H1 (cell line): ENCODE measurements at regions of chr6 and their contacts with region 1.

Region 1: GRCh38 chr6:37324131-37325033 is 29.4 kb upstream of the RNF8 start:
- DNase-seq: no peak
- H3K4me3 ChIP-seq: no peak overlapping the region
- H3K27ac ChIP-seq: no peak overlapping the region
- H3K4me1 ChIP-seq: no peaks in the 10 kb centered on the region
- H3K27me3 ChIP-seq: no peaks in the 10 kb centered on the region
- CTCF ChIP-seq: no peak
- EP300 ChIP-seq: no peak
- POLR2A ChIP-seq: no peak
- RAD21 ChIP-seq: no peak

Region 2: DNA sequence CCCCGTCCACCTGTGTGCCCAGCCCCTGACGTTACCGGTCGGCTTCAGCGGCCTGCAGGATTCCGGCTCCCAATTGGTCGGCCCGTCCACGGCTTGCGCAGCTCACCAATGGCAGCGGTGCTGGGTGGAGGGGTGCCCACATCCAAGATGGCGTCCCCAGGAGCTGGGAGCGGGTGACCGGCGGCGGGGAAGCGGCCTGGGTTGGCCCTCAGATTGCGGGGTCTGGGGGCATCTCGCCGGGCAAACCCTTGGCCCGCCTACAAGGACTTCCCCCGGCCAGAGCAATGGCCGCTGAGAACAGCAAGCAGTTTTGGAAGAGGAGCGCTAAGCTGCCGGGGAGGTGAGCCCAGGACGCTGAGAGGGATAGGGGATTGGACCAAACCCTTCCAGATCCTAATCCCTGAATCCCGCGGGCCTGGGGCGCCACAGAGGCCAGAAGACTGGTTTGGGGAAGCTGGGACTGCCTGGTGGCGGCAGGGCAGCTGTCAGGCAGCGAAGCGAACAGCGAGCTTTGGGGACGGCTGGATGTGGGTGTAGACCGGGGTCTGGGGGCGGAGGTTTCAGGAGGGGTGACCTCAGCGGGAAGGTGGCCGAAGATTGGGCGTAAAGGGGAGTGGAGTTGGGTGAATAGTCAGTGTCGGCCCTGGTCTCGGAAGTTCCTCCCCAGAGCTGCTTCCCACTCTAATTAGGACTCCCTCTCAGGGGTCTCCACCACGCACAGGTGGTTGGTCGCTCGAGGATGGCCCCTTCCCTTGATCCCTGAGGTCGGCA is 66.6 kb before region 1 on chr6 and contains the starts of genes TBC1D22B and TMEM217:
- CTCF ChIA-PET with region 1: no interaction called
- POLR2A ChIA-PET with region 1: no interaction called
- DNase-seq: peak; percentile 94 to 98
- H3K4me3 ChIP-seq: peak within 1 kb of the TSS; percentile 92 to 94 (median 94)
- H3K27ac ChIP-seq: peak within 1 kb of the TSS; percentile 92
- H3K4me1 ChIP-seq: peaks cover 0 to 4% (median 3%) of the 10 kb centered on the region in 4 experiments; a peak in 3 of 7 replicates
- H3K27me3 ChIP-seq: no peaks in the 10 kb centered on the region
- CTCF ChIP-seq: no peak
- EP300 ChIP-seq: no peak; a peak in 1 of 3 replicates
- POLR2A ChIP-seq: peak; percentile 31 to 62; a peak in 2 of 3 replicates
- RAD21 ChIP-seq: no peak
- total RNA-seq, gene TBC1D22B: 16.9 and 17.4 TPM in 2 replicates
- total RNA-seq, gene TMEM217: 0.29 and 0.60 TPM in 2 replicates

Region 3: DNA sequence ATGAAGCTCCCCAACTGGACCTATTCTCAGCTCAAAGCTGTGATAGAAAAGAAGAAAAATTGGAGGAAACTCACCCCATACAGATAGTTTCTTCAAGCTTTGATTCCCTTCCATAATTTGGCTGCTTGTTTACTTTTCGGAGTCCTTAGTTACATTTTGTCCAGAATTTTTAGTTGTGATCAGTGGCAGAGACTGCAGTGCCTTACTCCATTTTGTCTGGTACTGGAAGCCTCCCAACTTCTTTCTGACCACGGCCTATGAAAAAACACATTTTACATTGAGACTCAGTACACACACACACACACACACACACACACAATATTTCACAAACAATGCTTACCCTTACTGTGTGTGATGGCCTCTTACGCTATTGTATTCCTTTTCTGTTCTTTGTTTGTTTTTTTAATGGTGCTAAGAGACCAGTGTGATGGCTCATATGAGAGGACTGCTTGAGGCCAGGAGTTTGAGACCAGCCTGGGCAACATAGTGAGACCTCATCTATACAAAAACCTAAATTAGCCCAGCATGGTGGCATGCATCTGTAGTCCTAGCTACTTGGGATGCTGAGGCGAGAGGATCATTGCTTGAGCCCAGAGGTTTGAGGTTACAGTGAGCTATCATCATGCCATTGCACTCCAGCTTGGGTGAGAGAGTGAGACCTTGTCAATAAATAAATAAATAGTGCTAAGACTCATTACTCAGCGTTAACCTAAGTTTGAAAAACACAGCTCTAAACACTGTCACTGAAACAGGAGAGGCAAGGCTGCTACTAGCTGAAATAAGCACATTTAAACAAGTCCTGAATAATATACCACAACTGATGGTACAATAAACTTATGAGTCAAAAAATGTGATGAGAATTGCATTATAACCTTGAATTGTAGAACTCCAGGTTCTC is 15.6 kb after region 1 on chr6:
- CTCF ChIA-PET with region 1: interaction called, 11 read pairs
- POLR2A ChIA-PET with region 1: no interaction called
- DNase-seq: no peak
- H3K4me3 ChIP-seq: no peak overlapping the region
- H3K27ac ChIP-seq: no peak overlapping the region
- H3K4me1 ChIP-seq: no peaks in the 10 kb centered on the region
- H3K27me3 ChIP-seq: no peaks in the 10 kb centered on the region
- CTCF ChIP-seq: no peak
- EP300 ChIP-seq: no peak
- POLR2A ChIP-seq: no peak
- RAD21 ChIP-seq: no peak

Region 4: DNA sequence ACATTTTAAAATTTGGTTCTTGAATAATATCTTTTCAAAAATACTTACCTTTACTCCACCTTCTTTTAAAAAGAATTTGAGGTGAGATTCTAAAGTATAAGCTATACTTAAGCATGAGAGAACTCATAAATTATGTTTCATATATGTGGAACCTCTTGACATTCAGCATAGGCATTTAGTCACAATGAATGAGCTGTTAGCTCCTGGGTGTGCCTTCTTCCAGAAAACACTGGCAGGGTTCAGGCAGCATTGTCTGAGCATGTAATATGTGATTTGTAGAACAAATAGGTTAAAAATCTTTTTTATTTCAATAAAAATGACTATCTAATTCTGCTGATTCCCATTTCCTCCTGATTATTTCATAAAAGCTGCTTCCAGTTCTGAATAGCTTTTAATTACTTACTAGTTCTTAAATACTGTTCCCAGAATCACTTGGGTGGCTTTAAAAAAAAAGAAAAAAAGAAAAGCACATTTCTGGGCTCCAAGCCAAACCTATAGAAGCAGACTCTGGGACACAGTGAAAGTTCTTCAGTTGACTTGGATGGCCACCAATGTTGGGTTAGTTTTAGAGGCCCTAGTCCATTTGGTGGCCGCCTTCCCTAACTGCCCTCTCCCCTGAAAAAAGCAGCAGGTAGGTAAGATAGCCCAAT is 49.6 kb after region 1 on chr6:
- CTCF ChIA-PET with region 1: interaction called, 15 read pairs
- POLR2A ChIA-PET with region 1: no interaction called
- DNase-seq: no peak
- H3K4me3 ChIP-seq: no peak overlapping the region
- H3K27ac ChIP-seq: no peak overlapping the region
- H3K4me1 ChIP-seq: no peaks in the 10 kb centered on the region
- H3K27me3 ChIP-seq: no peaks in the 10 kb centered on the region
- CTCF ChIP-seq: no peak
- EP300 ChIP-seq: no peak
- POLR2A ChIP-seq: no peak
- RAD21 ChIP-seq: no peak

Region 5: DNA sequence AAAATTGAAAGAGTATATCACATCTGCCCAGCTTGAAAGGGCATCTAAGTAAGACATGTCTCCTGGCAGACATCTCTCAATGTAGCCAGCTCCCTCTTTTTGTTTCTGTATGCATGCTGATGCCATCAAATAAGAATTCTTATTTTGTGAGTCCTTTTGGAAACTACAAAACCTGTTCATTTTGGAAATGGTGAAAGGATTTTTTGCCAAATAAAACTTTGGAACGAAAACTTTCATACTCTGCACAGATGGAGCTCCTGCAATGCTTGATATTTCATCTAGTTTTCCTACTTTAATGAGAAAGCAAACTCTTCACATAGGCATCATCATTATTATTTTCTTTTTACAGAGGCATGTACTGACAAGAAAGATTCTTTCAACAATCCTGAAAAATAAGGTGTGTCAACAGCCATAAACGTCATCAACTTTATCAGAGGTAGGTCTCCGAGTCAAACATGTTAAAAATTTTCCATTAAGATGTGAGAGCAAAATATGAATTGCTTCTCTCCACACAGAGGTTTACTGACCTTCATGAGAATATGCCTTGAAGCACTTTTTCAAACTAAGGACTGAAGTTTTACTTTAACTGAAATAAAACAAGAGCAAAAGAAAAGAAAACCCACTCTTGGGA is 82.5 kb after region 1 on chr6:
- CTCF ChIA-PET with region 1: no interaction called
- POLR2A ChIA-PET with region 1: no interaction called
- DNase-seq: no peak
- H3K4me3 ChIP-seq: no peak overlapping the region
- H3K27ac ChIP-seq: no peak overlapping the region
- H3K4me1 ChIP-seq: no peaks in the 10 kb centered on the region
- H3K27me3 ChIP-seq: no peaks in the 10 kb centered on the region
- CTCF ChIP-seq: no peak
- EP300 ChIP-seq: no peak
- POLR2A ChIP-seq: no peak
- RAD21 ChIP-seq: no peak